Breast epithelium (tissue), 4 donors: ENCODE measurements at regions of chr12 and their contacts with region 1.

Region 1: GRCh38 chr12:33830070-33830469 is 192.2 kb upstream of the ALG10 start:
- DNase-seq: no peak
- H3K4me3 ChIP-seq: no peak overlapping the region
- H3K27ac ChIP-seq: no peak overlapping the region
- H3K4me1 ChIP-seq: no peaks in the 10 kb centered on the region
- H3K27me3 ChIP-seq: no peaks in the 10 kb centered on the region
- CTCF ChIP-seq: no peak
- POLR2A ChIP-seq: no peak

Region 2: DNA sequence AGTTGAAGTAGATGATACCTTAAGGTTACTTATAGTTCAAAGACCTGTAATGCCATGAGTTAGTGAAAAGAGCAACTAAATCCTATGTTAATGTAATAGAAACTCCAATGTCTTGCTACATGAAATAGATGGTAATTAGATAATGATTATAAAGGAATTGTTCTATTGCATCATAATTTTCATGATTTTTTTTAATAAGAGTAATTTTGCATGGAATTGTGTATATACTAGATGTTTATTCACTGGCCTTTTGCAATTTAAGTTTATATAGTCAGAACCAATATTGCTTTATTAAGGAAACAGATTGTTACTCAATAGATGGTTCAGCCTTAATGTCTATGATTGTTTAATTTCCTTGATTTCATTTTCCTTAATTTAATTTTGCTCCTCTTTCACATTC is 274.9 kb before region 1 on chr12:
- intact Hi-C with region 1: loop called (anchors 5 kb)
- DNase-seq: no peak
- H3K4me3 ChIP-seq: no peak overlapping the region
- H3K27ac ChIP-seq: no peak overlapping the region
- H3K4me1 ChIP-seq: no peaks in the 10 kb centered on the region
- H3K27me3 ChIP-seq: no peaks in the 10 kb centered on the region
- CTCF ChIP-seq: no peak
- POLR2A ChIP-seq: no peak

Region 3: DNA sequence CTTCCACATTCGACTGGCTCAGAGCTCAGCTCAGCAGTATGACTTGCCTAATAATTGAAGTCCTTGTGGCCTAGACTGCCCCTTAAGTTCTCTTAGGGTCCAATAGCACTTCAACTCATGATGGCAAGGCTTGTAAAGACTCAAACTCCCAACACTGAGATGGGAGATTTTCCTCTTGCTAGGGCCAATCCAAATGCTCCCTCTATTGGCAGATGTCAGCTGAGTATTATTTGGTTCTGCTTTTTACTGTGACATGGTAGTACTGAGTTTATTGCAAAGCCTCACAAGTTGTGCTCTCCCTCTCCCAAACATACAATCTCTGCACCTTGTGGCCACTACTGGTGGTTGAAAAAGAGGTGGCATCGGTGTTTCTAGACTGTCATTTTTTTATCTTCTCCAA is 356.4 kb after region 1 on chr12:
- intact Hi-C with region 1: no loop called
- DNase-seq: no peak
- H3K4me3 ChIP-seq: no peak overlapping the region
- H3K27ac ChIP-seq: no peak overlapping the region
- H3K4me1 ChIP-seq: no peaks in the 10 kb centered on the region
- H3K27me3 ChIP-seq: no peaks in the 10 kb centered on the region
- CTCF ChIP-seq: no peak
- POLR2A ChIP-seq: no peak